ENCODE measurements at regions of chr10 and their contacts with region 1.

Region 1: GRCh38 chr10:42652860-42653259 is 14.5 kb upstream of the ZNF33B start:
- DNase-seq: peak in 1 of 2 experiments; percentile 66
- H3K4me3 ChIP-seq: no peak overlapping the region
- H3K4me3 Mint-ChIP-seq: peak overlapping the region; percentile 48
- H3K27ac Mint-ChIP-seq: peak overlapping the region; percentile 12
- H3K4me1 ChIP-seq: peaks cover 39% of the 10 kb centered on the region
- H3K4me1 Mint-ChIP-seq: peaks cover 41% of the 10 kb centered on the region
- H3K27me3 ChIP-seq: no peaks in the 10 kb centered on the region
- H3K27me3 Mint-ChIP-seq: no peaks in the 10 kb centered on the region
- CTCF ChIP-seq: no peak

Region 2: DNA sequence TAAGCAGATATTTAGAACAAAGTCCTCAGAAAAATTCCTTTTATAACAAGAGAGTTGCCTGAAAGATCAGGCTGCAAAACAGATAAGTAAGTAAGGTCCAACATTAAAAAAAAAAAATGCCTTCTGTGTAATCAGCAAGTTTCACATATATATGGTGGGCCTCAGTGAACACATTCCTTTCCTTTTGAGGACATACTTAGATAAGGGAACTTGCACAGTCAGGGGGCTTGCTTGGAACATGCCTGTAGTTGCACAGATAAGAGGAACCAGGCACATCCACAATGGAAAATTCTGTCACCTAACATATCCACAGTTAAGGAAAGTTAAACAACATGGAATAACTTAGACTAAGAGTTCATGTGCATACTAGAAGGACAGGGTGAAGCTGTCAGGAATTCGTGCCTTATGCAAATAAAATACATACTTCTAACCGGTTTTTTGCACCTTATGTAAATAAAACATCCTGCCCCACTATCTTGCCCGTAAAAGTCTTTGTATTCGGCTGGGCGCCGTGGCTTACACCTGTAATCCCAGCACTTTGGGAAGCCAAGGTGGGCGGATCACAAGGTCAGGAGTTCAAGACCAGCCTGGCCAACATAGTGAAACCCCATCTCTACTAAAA is 271.8 kb before region 1 on chr10:
- CTCF ChIA-PET with region 1: no interaction called
- POLR2A ChIA-PET with region 1: no interaction called
- intact Hi-C with region 1: no loop called
- DNase-seq: no peak
- H3K4me3 ChIP-seq: no peak overlapping the region
- H3K4me3 Mint-ChIP-seq: no peak overlapping the region
- H3K27ac Mint-ChIP-seq: no peak overlapping the region
- H3K4me1 ChIP-seq: no peaks in the 10 kb centered on the region
- H3K4me1 Mint-ChIP-seq: no peaks in the 10 kb centered on the region
- H3K27me3 ChIP-seq: no peaks in the 10 kb centered on the region
- H3K27me3 Mint-ChIP-seq: no peaks in the 10 kb centered on the region
- CTCF ChIP-seq: no peak

Region 3: GRCh38 chr10:42690449-42691360 is 37.8 kb after region 1 on chr10:
- CTCF ChIA-PET with region 1: interaction called, 5 read pairs
- POLR2A ChIA-PET with region 1: no interaction called
- intact Hi-C with region 1: loop called (anchors 2 kb)
- DNase-seq: peak; percentile 24 to 45
- H3K4me3 ChIP-seq: no peak overlapping the region
- H3K4me3 Mint-ChIP-seq: no peak overlapping the region
- H3K27ac Mint-ChIP-seq: no peak overlapping the region
- H3K4me1 ChIP-seq: 0 out of 2 replicates have a peak, but pooled peaks cover 2% of the 10 kb centered on the region
- H3K4me1 Mint-ChIP-seq: no peaks in the 10 kb centered on the region
- H3K27me3 ChIP-seq: no peaks in the 10 kb centered on the region
- H3K27me3 Mint-ChIP-seq: no peaks in the 10 kb centered on the region
- CTCF ChIP-seq: peak; percentile 30 to 33

Measured in Caco-2 (cell line).